ENCODE measurements at regions of chr3 and their contacts with region 1.

Region 1: DNA sequence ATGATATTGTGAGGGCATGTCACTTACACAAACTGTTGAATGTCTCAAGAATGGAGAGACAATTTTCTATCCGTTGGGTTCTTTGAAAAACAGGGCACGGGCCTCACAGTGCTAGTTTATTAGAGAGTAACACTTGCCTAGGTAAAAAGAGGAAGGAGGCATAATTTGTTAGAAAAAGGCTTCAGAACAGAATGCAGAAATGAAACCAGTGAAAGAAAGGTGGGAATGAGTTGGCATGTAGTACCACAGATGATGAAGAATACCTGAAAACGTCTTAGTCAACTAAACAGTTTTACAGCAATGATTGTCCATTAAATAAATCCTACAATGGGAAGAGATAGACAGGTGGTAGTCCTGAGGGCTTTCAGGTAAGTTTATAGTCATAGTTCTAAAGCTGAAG is 1399.7 kb upstream of the CADM2 start:
- DNase-seq: no peak
- ATAC-seq: no peak
- H3K4me3 ChIP-seq: no peak overlapping the region
- H3K4me3 Mint-ChIP-seq: no peak overlapping the region
- H3K27ac ChIP-seq: no peak overlapping the region
- H3K27ac Mint-ChIP-seq: no peak overlapping the region
- H3K4me1 ChIP-seq: no peaks in the 10 kb centered on the region
- H3K4me1 Mint-ChIP-seq: no peaks in the 10 kb centered on the region
- H3K27me3 ChIP-seq: no peaks in the 10 kb centered on the region
- H3K27me3 Mint-ChIP-seq: no peaks in the 10 kb centered on the region
- CTCF ChIP-seq: no peak

Region 2: GRCh38 chr3:83523470-83524073 is 35.5 kb before region 1 on chr3:
- CTCF ChIA-PET with region 1: no interaction called
- POLR2A ChIA-PET with region 1: no interaction called
- intact Hi-C with region 1: loop called (anchors 1 kb)
- DNase-seq: no peak
- ATAC-seq: no peak
- H3K4me3 ChIP-seq: no peak overlapping the region
- H3K4me3 Mint-ChIP-seq: no peak overlapping the region
- H3K27ac ChIP-seq: no peak overlapping the region
- H3K27ac Mint-ChIP-seq: no peak overlapping the region
- H3K4me1 ChIP-seq: no peaks in the 10 kb centered on the region
- H3K4me1 Mint-ChIP-seq: no peaks in the 10 kb centered on the region
- H3K27me3 ChIP-seq: no peaks in the 10 kb centered on the region
- H3K27me3 Mint-ChIP-seq: no peaks in the 10 kb centered on the region
- CTCF ChIP-seq: no peak